ENCODE measurements at regions of chr3 and their contacts with region 1.

Region 1: GRCh38 chr3:138594150-138594934 is at the start of gene CEP70:
- DNase-seq: peak; percentile 79 to 92 (median 89)
- ATAC-seq: peak; percentile 95
- H3K4me3 ChIP-seq: peak within 1 kb of the TSS; percentile 96
- H3K4me3 Mint-ChIP-seq: peak within 1 kb of the TSS; percentile 87 to 96 (median 90)
- H3K27ac ChIP-seq: peak within 1 kb of the TSS; percentile 79
- H3K27ac Mint-ChIP-seq: peak within 1 kb of the TSS; percentile 82 to 99 (median 94)
- H3K4me1 ChIP-seq: peaks cover 0 to 4% of the 10 kb centered on the region in 2 donors
- H3K4me1 Mint-ChIP-seq: peaks cover 0 to 17% (median 12%) of the 10 kb centered on the region in 7 donors
- H3K27me3 ChIP-seq: no peaks in the 10 kb centered on the region
- H3K27me3 Mint-ChIP-seq: no peaks in the 10 kb centered on the region
- total RNA-seq, gene CEP70: 11.8 to 35.1 (median 21.1) TPM

Region 2: DNA sequence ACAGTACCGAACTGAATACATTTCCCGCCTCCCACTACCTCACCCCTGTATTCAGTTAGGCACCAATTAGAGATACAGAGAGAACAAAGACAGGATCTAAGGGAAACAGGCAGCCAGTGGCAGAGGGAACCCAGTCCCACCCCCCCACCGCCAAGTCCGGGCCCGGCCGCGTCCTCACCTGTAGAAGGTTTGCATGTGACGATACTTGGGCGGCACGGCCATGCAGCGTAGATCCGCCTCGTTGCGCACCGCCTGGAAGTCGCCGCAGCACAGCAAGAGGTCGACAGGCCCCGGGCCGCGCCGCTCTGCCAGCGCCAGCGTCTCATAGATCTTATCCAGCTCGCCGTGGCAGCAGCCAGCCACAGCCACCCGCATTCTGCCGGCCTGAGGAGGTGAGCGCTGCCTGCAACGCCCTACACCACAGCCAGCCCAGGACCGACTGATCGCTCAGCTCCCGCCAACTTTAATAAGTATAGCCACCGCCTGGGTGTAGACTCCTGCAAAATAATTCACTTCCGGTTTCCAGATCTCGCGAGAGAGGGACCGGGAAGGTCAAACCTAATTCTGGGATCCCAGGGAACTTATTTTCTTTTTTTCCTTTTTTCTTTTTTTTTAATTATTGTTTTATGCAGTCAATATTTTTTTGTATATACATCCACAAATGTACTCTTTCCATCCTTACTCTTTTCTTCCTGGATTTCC is 419.8 kb before region 1 on chr3 and contains the start of gene DBR1:
- CTCF ChIA-PET with region 1: no interaction called
- POLR2A ChIA-PET with region 1: interaction called, 4 read pairs
- intact Hi-C with region 1: loop called in 1 of 2 experiments (anchors 5 kb)
- DNase-seq: peak; percentile 51 to 81 (median 74)
- ATAC-seq: peak; percentile 91
- H3K4me3 ChIP-seq: peak within 1 kb of the TSS; percentile 79
- H3K4me3 Mint-ChIP-seq: peak within 1 kb of the TSS; percentile 87 to 99 (median 98)
- H3K27ac ChIP-seq: peak within 1 kb of the TSS; percentile 80
- H3K27ac Mint-ChIP-seq: peak within 1 kb of the TSS; percentile 96 to 99 (median 97)
- H3K4me1 ChIP-seq: peaks cover 20 to 22% of the 10 kb centered on the region in 2 donors
- H3K4me1 Mint-ChIP-seq: peaks cover 22 to 56% (median 45%) of the 10 kb centered on the region in 7 donors
- H3K27me3 ChIP-seq: no peaks in the 10 kb centered on the region
- H3K27me3 Mint-ChIP-seq: peaks cover 0 to 9% (median 0%) of the 10 kb centered on the region in 5 donors
- total RNA-seq, gene DBR1: 15.4 to 28.2 (median 20.8) TPM

Region 3: GRCh38 chr3:138361561-138361971 is 232.8 kb before region 1 on chr3:
- CTCF ChIA-PET with region 1: no interaction called
- POLR2A ChIA-PET with region 1: no interaction called
- intact Hi-C with region 1: no loop called
- DNase-seq: no peak
- ATAC-seq: no peak
- H3K4me3 ChIP-seq: no peak overlapping the region
- H3K4me3 Mint-ChIP-seq: no peak overlapping the region
- H3K27ac ChIP-seq: no peak overlapping the region
- H3K27ac Mint-ChIP-seq: no peak overlapping the region
- H3K4me1 ChIP-seq: no peaks in the 10 kb centered on the region
- H3K4me1 Mint-ChIP-seq: no peaks in the 10 kb centered on the region
- H3K27me3 ChIP-seq: no peaks in the 10 kb centered on the region
- H3K27me3 Mint-ChIP-seq: peaks cover 0 to 9% (median 0%) of the 10 kb centered on the region in 5 donors

Region 4: DNA sequence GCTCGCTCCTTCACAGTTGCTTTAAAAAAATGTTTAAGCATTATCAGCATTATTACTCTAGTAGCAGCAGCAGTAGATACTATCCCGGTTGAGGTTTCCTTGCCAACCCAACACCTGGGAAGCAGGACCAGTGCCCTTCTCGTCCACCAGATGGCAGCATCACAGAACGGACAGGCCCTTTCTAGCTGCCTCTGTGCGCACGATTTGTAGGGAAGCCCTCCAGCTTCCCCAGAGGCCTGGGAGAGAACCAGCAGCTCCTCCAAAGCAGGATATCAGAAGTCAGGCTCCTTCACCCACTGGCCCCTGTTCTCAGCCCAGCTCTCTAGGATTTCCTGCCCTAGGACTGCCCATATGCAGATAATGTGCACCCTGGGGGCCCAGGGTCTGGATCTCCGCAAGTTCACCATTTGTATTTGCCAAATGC is 176.8 kb before region 1 on chr3:
- CTCF ChIA-PET with region 1: no interaction called
- POLR2A ChIA-PET with region 1: no interaction called
- intact Hi-C with region 1: loop called in 1 of 2 experiments (anchors 5 kb)
- DNase-seq: peak; percentile 8 to 60 (median 47)
- ATAC-seq: peak; percentile 74
- H3K4me3 ChIP-seq: no peak overlapping the region
- H3K4me3 Mint-ChIP-seq: no peak overlapping the region
- H3K27ac ChIP-seq: no peak overlapping the region
- H3K27ac Mint-ChIP-seq: no peak overlapping the region
- H3K4me1 ChIP-seq: no peaks in the 10 kb centered on the region
- H3K4me1 Mint-ChIP-seq: peaks cover 0 to 7% (median 0%) of the 10 kb centered on the region in 7 donors
- H3K27me3 ChIP-seq: no peaks in the 10 kb centered on the region
- H3K27me3 Mint-ChIP-seq: peaks cover 12 to 28% (median 19%) of the 10 kb centered on the region in 5 donors

Region 5: GRCh38 chr3:138578141-138578540 is 16.2 kb before region 1 on chr3:
- CTCF ChIA-PET with region 1: interaction called, 4 read pairs
- POLR2A ChIA-PET with region 1: interaction called, 9 read pairs
- intact Hi-C with region 1: loop called in 1 of 2 experiments (anchors 1 kb)
- DNase-seq: peak in 2 of 9 donors; percentile 2 to 4
- ATAC-seq: peak; percentile 47
- H3K4me3 ChIP-seq: peak overlapping the region; percentile 17
- H3K4me3 Mint-ChIP-seq: peak overlapping the region; percentile 40 to 89 (median 78)
- H3K27ac ChIP-seq: peak overlapping the region; percentile 12
- H3K27ac Mint-ChIP-seq: peak overlapping the region; percentile 29 to 86 (median 70)
- H3K4me1 ChIP-seq: peaks cover 0 to 14% of the 10 kb centered on the region in 2 donors
- H3K4me1 Mint-ChIP-seq: peaks cover 22 to 37% (median 30%) of the 10 kb centered on the region in 7 donors
- H3K27me3 ChIP-seq: no peaks in the 10 kb centered on the region
- H3K27me3 Mint-ChIP-seq: no peaks in the 10 kb centered on the region

Region 6: GRCh38 chr3:138834359-138835212 is 240.2 kb after region 1 on chr3 and contains the start of gene PIK3CB:
- CTCF ChIA-PET with region 1: interaction called, 3 read pairs
- POLR2A ChIA-PET with region 1: interaction called, 9 read pairs
- intact Hi-C with region 1: loop called (anchors 1 kb)
- DNase-seq: peak; percentile 80 to 92 (median 90)
- ATAC-seq: peak; percentile 93
- H3K4me3 ChIP-seq: peak within 1 kb of the TSS; percentile 90
- H3K4me3 Mint-ChIP-seq: peak within 1 kb of the TSS; percentile 84 to 100 (median 96)
- H3K27ac ChIP-seq: peak within 1 kb of the TSS; percentile 80
- H3K27ac Mint-ChIP-seq: peak within 1 kb of the TSS; percentile 90 to 100 (median 99)
- H3K4me1 ChIP-seq: peaks cover 16 to 21% of the 10 kb centered on the region in 2 donors
- H3K4me1 Mint-ChIP-seq: peaks cover 19 to 36% (median 26%) of the 10 kb centered on the region in 7 donors
- H3K27me3 ChIP-seq: no peaks in the 10 kb centered on the region
- H3K27me3 Mint-ChIP-seq: no peaks in the 10 kb centered on the region
- total RNA-seq, gene PIK3CB: 22.2 to 46.9 (median 38.3) TPM

Region 7: GRCh38 chr3:139343895-139344856 is 749.8 kb after region 1 on chr3 and contains the start of gene MRPS22:
- CTCF ChIA-PET with region 1: no interaction called
- POLR2A ChIA-PET with region 1: no interaction called
- intact Hi-C with region 1: loop called (anchors 1 to 10 kb)
- DNase-seq: peak; percentile 52 to 87 (median 85)
- ATAC-seq: peak; percentile 97
- H3K4me3 ChIP-seq: peak within 1 kb of the TSS; percentile 86
- H3K4me3 Mint-ChIP-seq: peak within 1 kb of the TSS in 2 of 10 donors; percentile 59 to 72
- H3K27ac ChIP-seq: peak within 1 kb of the TSS; percentile 88
- H3K27ac Mint-ChIP-seq: peak within 1 kb of the TSS in 3 of 9 donors; percentile 15 to 64 (median 31)
- H3K4me1 ChIP-seq: peaks cover 15% of the 10 kb centered on the region in 2 donors
- H3K4me1 Mint-ChIP-seq: peaks cover 7 to 19% (median 10%) of the 10 kb centered on the region in 7 donors
- H3K27me3 ChIP-seq: no peaks in the 10 kb centered on the region
- H3K27me3 Mint-ChIP-seq: peaks cover 0 to 9% (median 6%) of the 10 kb centered on the region in 5 donors
- total RNA-seq, gene MRPS22: 26.2 to 37.2 (median 36.3) TPM